ENCODE measurements at regions of chr15 and their contacts with region 1.

Region 1: DNA sequence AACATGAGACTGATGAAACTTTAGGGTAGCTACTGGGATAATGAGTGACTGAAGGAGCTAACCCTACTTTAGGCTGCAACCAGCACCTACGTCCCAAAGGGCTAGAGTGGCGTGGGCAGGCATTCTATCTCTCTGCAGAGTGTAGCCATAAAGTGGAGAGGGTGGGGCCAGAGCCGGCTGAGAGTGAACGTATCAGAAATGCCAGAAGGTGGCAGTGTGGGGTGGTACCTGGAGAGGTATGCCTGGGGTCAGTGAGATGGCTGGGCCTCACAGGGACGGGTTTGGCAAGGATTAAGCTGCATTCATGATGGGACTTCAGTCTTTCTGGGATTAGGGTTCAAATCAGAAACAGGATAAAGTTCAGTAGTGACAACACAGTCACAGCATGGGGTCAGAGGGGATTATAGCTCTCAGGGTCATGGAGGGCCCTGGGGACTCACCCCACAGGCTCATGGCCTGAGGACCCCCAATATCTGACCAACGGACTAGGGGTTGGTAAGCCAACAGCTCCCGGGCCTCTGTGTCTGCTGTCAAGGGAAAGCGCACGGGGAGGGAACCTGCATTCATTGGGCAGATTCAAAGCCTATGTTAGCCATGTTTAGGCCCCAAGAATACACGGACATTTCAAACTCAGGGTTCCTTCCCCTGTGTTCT is 86.5 kb upstream of the FOXB1 start:
- DNase-seq: peak; percentile 89
- ATAC-seq: peak; percentile 68
- H3K4me3 Mint-ChIP-seq: no peak overlapping the region
- H3K27ac Mint-ChIP-seq: peak overlapping the region; percentile 34
- H3K4me1 Mint-ChIP-seq: peaks cover 28% of the 10 kb centered on the region
- H3K27me3 Mint-ChIP-seq: peaks cover 7% of the 10 kb centered on the region
- CTCF ChIP-seq: peak; percentile 78

Region 2: GRCh38 chr15:59688841-59689625 is 228.6 kb before region 1 on chr15 and contains the start of gene BNIP2:
- CTCF ChIA-PET with region 1: interaction called, 27 read pairs
- POLR2A ChIA-PET with region 1: no interaction called
- intact Hi-C with region 1: no loop called
- DNase-seq: peak; percentile 99
- ATAC-seq: peak; percentile 90
- H3K4me3 Mint-ChIP-seq: peak within 1 kb of the TSS; percentile 85
- H3K27ac Mint-ChIP-seq: peak within 1 kb of the TSS; percentile 96
- H3K4me1 Mint-ChIP-seq: peaks cover 44% of the 10 kb centered on the region
- H3K27me3 Mint-ChIP-seq: no peaks in the 10 kb centered on the region
- CTCF ChIP-seq: no peak
- total RNA-seq, gene BNIP2: 52.2 to 53.2 TPM

Region 3: DNA sequence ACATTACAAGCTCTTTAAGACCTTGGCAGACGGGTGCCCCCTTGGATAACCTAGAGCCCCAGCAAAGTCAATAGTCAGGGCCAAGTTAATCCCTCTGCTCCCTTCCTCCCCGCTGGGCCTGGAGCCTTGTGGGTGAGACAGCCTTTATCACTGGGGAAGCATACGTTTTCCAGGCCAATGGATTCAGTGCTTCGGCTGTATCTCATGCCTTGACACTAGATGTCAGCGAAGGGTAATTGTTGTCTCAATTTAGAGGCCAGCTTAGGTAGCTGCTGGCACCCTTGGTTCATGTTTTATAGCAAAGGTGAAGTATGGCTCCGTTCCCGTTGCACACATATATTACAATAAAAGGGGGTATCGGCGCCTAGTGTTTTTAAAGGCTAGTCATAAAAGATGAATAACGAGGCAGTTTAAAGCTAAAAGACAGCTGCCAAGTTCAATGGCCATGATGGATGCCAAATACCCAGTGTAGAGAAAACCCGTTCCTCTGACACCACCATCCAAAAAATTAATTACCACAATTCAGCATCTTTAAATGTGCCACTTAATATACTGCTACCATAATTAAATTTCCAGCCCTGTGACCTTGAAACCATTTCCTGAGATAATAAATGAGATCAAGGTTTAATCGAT is 176.2 kb before region 1 on chr15:
- CTCF ChIA-PET with region 1: interaction called, 19 read pairs
- POLR2A ChIA-PET with region 1: no interaction called
- intact Hi-C with region 1: no loop called
- DNase-seq: no peak
- ATAC-seq: no peak
- H3K4me3 Mint-ChIP-seq: no peak overlapping the region
- H3K27ac Mint-ChIP-seq: no peak overlapping the region
- H3K4me1 Mint-ChIP-seq: no peaks in the 10 kb centered on the region
- H3K27me3 Mint-ChIP-seq: no peaks in the 10 kb centered on the region
- CTCF ChIP-seq: no peak

Region 4: DNA sequence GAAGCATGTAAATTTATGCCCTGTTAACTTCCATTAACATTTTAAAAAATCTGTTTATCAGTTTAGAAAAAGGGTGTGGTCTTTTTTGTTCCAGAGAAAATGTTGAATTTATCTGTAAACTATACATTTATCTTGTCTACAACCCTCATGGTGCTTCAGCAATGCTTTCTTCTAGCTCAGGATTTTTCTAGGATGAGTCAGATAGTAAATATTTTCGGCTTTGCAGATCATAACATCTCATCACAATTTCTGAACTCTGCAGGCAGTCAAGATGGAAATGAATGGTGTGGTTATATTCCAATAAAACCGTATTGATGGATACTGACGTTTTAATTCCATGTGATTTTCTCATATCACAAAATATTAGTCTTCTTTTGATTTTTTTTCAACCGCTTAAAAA is 16.0 kb after region 1 on chr15:
- CTCF ChIA-PET with region 1: interaction called, 11 read pairs
- POLR2A ChIA-PET with region 1: no interaction called
- intact Hi-C with region 1: no loop called
- DNase-seq: no peak
- ATAC-seq: no peak
- H3K4me3 Mint-ChIP-seq: no peak overlapping the region
- H3K27ac Mint-ChIP-seq: no peak overlapping the region
- H3K4me1 Mint-ChIP-seq: peaks cover 11% of the 10 kb centered on the region
- H3K27me3 Mint-ChIP-seq: peaks cover 10% of the 10 kb centered on the region
- CTCF ChIP-seq: no peak

Region 5: GRCh38 chr15:59946084-59946483 is 28.5 kb after region 1 on chr15:
- CTCF ChIA-PET with region 1: no interaction called
- POLR2A ChIA-PET with region 1: no interaction called
- intact Hi-C with region 1: no loop called
- DNase-seq: no peak
- ATAC-seq: no peak
- H3K4me3 Mint-ChIP-seq: no peak overlapping the region
- H3K27ac Mint-ChIP-seq: no peak overlapping the region
- H3K4me1 Mint-ChIP-seq: peaks cover 2% of the 10 kb centered on the region
- H3K27me3 Mint-ChIP-seq: peaks cover 3% of the 10 kb centered on the region
- CTCF ChIP-seq: no peak

Region 6: DNA sequence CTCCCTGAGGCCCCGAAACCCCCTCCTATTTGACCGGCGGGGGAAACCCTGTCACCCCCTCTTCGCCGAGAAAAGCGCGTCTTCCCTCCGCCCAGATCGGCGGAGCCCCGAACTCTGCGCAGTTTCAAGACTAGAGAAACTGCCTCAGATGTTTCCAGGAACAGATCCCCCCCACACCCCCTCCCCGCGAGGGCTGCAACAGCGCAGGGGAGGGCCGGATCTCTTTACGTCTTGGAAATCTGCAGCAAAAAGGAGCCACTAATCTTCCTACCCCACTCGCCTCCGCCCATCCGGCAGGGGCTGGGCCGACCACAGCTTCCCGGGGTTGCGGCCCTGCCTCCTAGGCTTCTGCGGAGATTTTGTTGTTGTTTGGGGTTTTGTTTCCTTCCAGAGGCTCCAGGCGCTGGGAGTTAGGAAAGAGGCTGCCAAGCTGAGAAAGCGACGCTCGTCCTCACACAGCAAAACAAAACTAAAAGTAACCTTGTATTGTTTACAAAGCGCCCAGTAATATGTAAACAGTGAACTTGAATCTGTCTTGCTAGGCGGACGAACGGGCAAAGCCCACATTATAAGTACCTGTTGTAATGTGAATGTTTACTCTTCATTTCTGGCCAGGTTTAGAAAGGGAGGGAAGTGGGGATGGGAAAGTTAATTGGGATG is 88.7 kb after region 1 on chr15:
- CTCF ChIA-PET with region 1: interaction called, 18 read pairs
- POLR2A ChIA-PET with region 1: interaction called, 3 read pairs
- intact Hi-C with region 1: loop called (anchors 5 kb)
- DNase-seq: peak; percentile 88
- ATAC-seq: peak; percentile 77
- H3K4me3 Mint-ChIP-seq: peak overlapping the region; percentile 79
- H3K27ac Mint-ChIP-seq: peak overlapping the region; percentile 75
- H3K4me1 Mint-ChIP-seq: peaks cover 29% of the 10 kb centered on the region
- H3K27me3 Mint-ChIP-seq: peaks cover 84% of the 10 kb centered on the region
- CTCF ChIP-seq: no peak

Region 7: DNA sequence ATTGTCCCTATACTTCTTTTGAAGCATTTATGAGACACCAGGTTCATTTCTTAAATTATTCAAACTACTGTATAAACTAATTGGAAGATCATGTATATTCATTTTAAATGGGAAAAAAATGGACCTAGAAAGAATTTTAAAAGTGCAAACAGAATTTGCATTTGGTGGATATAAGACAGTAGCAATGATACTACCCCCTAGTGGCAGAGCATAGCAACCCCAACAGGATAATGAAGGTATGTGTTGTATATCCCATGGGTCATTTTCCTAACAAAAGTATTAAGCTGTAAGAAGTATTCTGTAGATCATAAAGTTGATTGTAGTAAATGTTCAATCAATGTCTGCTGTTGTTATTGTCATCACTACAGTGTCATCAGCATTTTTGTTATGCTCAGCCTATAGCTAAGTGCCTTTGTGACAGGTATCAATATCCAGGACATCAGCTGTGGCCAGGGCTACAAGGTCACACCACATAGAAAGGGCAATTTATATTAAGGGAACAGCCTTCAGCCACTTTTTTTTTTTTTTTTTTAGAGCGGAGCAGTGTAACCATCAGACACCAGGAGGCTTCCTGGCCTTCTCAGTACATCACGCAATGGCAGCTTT is 262.3 kb after region 1 on chr15:
- CTCF ChIA-PET with region 1: interaction called, 33 read pairs
- POLR2A ChIA-PET with region 1: no interaction called
- intact Hi-C with region 1: loop called (anchors 2 kb)
- DNase-seq: peak; percentile 61
- ATAC-seq: peak; percentile 68
- H3K4me3 Mint-ChIP-seq: no peak overlapping the region
- H3K27ac Mint-ChIP-seq: no peak overlapping the region
- H3K4me1 Mint-ChIP-seq: no peaks in the 10 kb centered on the region
- H3K27me3 Mint-ChIP-seq: peaks cover 15% of the 10 kb centered on the region
- CTCF ChIP-seq: peak; percentile 96

Measured in activated CD8-positive, alpha-beta T cell treated with anti-CD3 and anti-CD28 coated beads for 36 hours (primary cell).